MCF 10A (cell line): ENCODE measurements at regions of chr3 and their contacts with region 1.

Region 1: GRCh38 chr3:16290007-16290826 is 25.2 kb downstream of the OXNAD1 start:
- DNase-seq: peak; percentile 59
- H3K4me3 Mint-ChIP-seq: no peak overlapping the region
- H3K27ac Mint-ChIP-seq: peak overlapping the region; percentile 39
- H3K4me1 Mint-ChIP-seq: no peaks in the 10 kb centered on the region
- H3K27me3 Mint-ChIP-seq: no peaks in the 10 kb centered on the region
- CTCF ChIP-seq: peak; percentile 81

Region 2: GRCh38 chr3:15610082-15610759 is 680.0 kb before region 1 on chr3:
- CTCF ChIA-PET with region 1: no interaction called
- POLR2A ChIA-PET with region 1: no interaction called
- intact Hi-C with region 1: no loop called
- DNase-seq: peak; percentile 100
- H3K4me3 Mint-ChIP-seq: peak overlapping the region; percentile 12
- H3K27ac Mint-ChIP-seq: peak overlapping the region; percentile 63
- H3K4me1 Mint-ChIP-seq: peaks cover 13% of the 10 kb centered on the region
- H3K27me3 Mint-ChIP-seq: no peaks in the 10 kb centered on the region
- CTCF ChIP-seq: no peak

Region 3: DNA sequence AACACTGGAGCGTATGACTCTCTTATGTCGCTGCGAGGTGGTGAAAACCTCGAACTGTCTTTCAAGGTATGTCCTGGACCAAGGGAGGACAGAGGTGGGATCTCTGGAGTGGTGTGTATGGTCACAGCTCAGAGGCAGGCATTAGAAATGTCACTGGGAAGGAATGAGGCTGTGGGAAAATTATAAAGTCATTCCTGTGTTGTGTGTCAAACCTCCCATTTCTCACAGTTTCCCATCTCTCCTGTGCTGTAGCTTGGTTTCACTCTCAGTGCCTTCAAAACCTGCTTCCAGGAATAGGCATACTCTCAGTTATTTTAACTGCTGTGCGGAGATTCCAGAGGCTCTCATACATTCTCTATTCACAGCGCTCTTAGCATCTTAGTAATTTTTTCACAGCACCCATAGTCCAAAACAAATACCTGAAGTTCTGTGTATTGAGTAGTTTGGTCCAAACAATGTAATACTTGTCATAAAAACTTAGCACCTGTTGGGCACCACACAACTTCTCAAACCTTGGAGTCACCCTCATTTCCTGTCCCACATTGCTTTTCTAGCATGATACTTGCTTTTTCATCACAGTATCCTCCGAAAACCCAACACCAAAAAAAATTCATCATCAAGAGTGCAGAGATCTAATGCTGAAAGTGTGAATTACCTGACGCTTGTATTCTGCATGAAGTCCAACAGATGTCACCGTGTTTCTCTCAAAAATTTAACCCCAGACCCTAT is 78.9 kb before region 1 on chr3:
- CTCF ChIA-PET with region 1: no interaction called
- POLR2A ChIA-PET with region 1: no interaction called
- intact Hi-C with region 1: no loop called
- DNase-seq: no peak
- H3K4me3 Mint-ChIP-seq: no peak overlapping the region
- H3K27ac Mint-ChIP-seq: no peak overlapping the region
- H3K4me1 Mint-ChIP-seq: no peaks in the 10 kb centered on the region
- H3K27me3 Mint-ChIP-seq: no peaks in the 10 kb centered on the region
- CTCF ChIP-seq: no peak

Region 4: GRCh38 chr3:16300881-16301359 is 10.7 kb after region 1 on chr3:
- CTCF ChIA-PET with region 1: interaction called, 12 read pairs
- POLR2A ChIA-PET with region 1: interaction called, 4 read pairs
- intact Hi-C with region 1: no loop called
- DNase-seq: no peak
- H3K4me3 Mint-ChIP-seq: no peak overlapping the region
- H3K27ac Mint-ChIP-seq: no peak overlapping the region
- H3K4me1 Mint-ChIP-seq: no peaks in the 10 kb centered on the region
- H3K27me3 Mint-ChIP-seq: no peaks in the 10 kb centered on the region
- CTCF ChIP-seq: no peak

Region 5: GRCh38 chr3:16311960-16312451 is 21.8 kb after region 1 on chr3:
- CTCF ChIA-PET with region 1: interaction called, 10 read pairs
- POLR2A ChIA-PET with region 1: interaction called, 3 read pairs
- intact Hi-C with region 1: no loop called
- DNase-seq: no peak
- H3K4me3 Mint-ChIP-seq: no peak overlapping the region
- H3K27ac Mint-ChIP-seq: no peak overlapping the region
- H3K4me1 Mint-ChIP-seq: peaks cover 7% of the 10 kb centered on the region
- H3K27me3 Mint-ChIP-seq: no peaks in the 10 kb centered on the region
- CTCF ChIP-seq: no peak

Region 6: GRCh38 chr3:16319307-16319706 is 29.1 kb after region 1 on chr3:
- CTCF ChIA-PET with region 1: interaction called, 12 read pairs
- POLR2A ChIA-PET with region 1: no interaction called
- intact Hi-C with region 1: no loop called
- DNase-seq: peak; percentile 55
- H3K4me3 Mint-ChIP-seq: no peak overlapping the region
- H3K27ac Mint-ChIP-seq: no peak overlapping the region
- H3K4me1 Mint-ChIP-seq: no peaks in the 10 kb centered on the region
- H3K27me3 Mint-ChIP-seq: no peaks in the 10 kb centered on the region
- CTCF ChIP-seq: peak; percentile 23

Region 7: GRCh38 chr3:16516695-16517481 is 226.7 kb after region 1 on chr3:
- CTCF ChIA-PET with region 1: interaction called, 35 read pairs
- POLR2A ChIA-PET with region 1: no interaction called
- intact Hi-C with region 1: loop called (anchors 1 kb)
- DNase-seq: peak; percentile 57
- H3K4me3 Mint-ChIP-seq: no peak overlapping the region
- H3K27ac Mint-ChIP-seq: no peak overlapping the region
- H3K4me1 Mint-ChIP-seq: no peaks in the 10 kb centered on the region
- H3K27me3 Mint-ChIP-seq: peaks cover 15% of the 10 kb centered on the region
- CTCF ChIP-seq: peak; percentile 19

Region 8: DNA sequence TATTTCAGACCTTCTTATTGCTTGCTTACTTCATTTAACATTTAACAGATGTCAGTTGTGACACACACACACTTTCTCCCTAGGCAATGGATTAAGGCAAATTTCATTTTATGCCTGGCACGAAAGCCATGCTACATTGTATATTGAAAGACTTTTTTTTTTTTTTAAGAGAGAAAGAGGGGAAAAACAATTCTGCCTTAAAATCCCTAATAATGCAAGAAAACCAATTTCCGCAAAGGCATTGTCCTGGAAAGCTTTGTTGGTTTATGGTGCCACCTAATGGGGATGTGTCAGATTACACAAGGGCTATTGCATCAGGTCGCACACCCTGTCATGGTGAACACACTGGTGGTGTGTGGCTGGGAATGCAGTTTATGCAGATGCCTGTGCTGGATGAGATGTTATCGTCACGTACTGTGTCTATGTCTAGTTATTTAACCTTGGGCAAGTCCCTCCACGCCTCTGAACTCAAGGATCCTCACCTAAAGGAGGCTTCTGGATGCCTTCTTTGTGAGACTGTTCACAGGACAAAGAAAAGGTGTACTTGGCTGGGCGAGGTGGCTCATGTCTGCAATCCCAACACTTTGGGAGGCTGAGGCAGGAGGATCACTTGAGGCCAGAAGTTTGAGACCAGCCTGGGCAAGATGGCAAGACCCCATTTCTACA is 260.6 kb after region 1 on chr3:
- CTCF ChIA-PET with region 1: interaction called, 111 read pairs
- POLR2A ChIA-PET with region 1: interaction called, 5 read pairs
- intact Hi-C with region 1: loop called (anchors 1 kb)
- DNase-seq: peak; percentile 90
- H3K4me3 Mint-ChIP-seq: no peak overlapping the region
- H3K27ac Mint-ChIP-seq: peak overlapping the region; percentile 54
- H3K4me1 Mint-ChIP-seq: peaks cover 22% of the 10 kb centered on the region
- H3K27me3 Mint-ChIP-seq: peaks cover 20% of the 10 kb centered on the region
- CTCF ChIP-seq: peak; percentile 82

Region 9: GRCh38 chr3:17233398-17233800 is 943.2 kb after region 1 on chr3:
- CTCF ChIA-PET with region 1: interaction called, 3 read pairs
- POLR2A ChIA-PET with region 1: no interaction called
- intact Hi-C with region 1: loop called (anchors 2 kb)
- DNase-seq: peak; percentile 75
- H3K4me3 Mint-ChIP-seq: no peak overlapping the region
- H3K27ac Mint-ChIP-seq: no peak overlapping the region
- H3K4me1 Mint-ChIP-seq: peaks cover 5% of the 10 kb centered on the region
- H3K27me3 Mint-ChIP-seq: no peaks in the 10 kb centered on the region
- CTCF ChIP-seq: peak; percentile 73